ENCODE measurements at regions of chr16 and their contacts with region 1.

Region 1: GRCh38 chr16:52069866-52070265 is 477.1 kb downstream of the TOX3 start:
- DNase-seq: no peak
- ATAC-seq: peak; percentile 64
- H3K4me3 ChIP-seq: no peak overlapping the region
- H3K4me1 ChIP-seq: no peaks in the 10 kb centered on the region
- CTCF ChIP-seq: no peak

Region 2: GRCh38 chr16:52912565-52913173 is 842.8 kb after region 1 on chr16:
- intact Hi-C with region 1: loop called in 1 of 2 experiments (anchors 5 kb)
- DNase-seq: peak; percentile 51 to 86 (median 79)
- ATAC-seq: peak; percentile 89
- H3K4me3 ChIP-seq: no peak overlapping the region
- H3K4me1 ChIP-seq: no peaks in the 10 kb centered on the region
- CTCF ChIP-seq: peak; percentile 56

Measured in mucosa of descending colon (tissue), 3 donors.